ENCODE measurements at regions of chr20 and their contacts with region 1.

Region 1: GRCh38 chr20:4844325-4844724 is 122.6 kb downstream of the PRND start:
- DNase-seq: peak; percentile 10
- H3K4me3 ChIP-seq: no peak overlapping the region
- H3K27ac ChIP-seq: no peak overlapping the region
- H3K4me1 ChIP-seq: no peaks in the 10 kb centered on the region
- H3K27me3 ChIP-seq: no peaks in the 10 kb centered on the region
- CTCF ChIP-seq: no peak

Region 2: DNA sequence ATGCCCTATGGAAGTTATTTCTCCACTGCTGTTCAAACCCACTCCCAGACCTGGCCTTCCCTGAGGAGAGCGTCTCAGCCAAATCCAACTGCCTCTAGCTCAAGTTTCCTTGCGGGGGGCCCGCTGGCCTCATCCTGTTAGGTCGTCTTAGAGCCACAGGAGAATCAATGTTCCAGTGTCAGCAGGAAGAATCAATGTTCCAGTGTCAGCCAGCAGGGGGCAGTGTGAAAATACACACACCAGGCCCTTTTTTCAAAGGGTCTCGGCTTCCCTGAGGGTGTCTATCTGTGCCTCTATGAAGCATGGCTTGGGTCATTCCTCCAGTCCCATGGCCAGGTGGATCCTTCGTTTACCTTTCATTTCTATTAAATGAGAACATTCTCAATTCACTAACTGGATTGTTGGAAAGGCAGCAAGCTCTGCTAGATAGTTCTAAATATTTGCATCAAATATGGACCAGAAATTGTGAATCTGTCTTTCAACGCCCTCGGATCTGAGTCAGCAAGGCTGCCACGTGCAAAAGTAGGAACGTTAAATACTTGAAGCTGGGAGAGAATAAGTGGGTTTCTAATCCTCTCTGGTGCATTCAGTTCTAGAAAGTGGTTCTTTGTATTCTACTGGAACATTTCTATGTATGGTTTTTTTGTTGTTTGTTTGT is 103.4 kb before region 1 on chr20:
- CTCF ChIA-PET with region 1: no interaction called
- POLR2A ChIA-PET with region 1: no interaction called
- intact Hi-C with region 1: no loop called
- DNase-seq: peak; percentile 74
- H3K4me3 ChIP-seq: no peak overlapping the region
- H3K27ac ChIP-seq: no peak overlapping the region
- H3K4me1 ChIP-seq: no peaks in the 10 kb centered on the region
- H3K27me3 ChIP-seq: peaks cover 2% of the 10 kb centered on the region
- CTCF ChIP-seq: peak; percentile 88

Region 3: GRCh38 chr20:4787069-4787468 is 57.3 kb before region 1 on chr20:
- CTCF ChIA-PET with region 1: no interaction called
- POLR2A ChIA-PET with region 1: no interaction called
- intact Hi-C with region 1: no loop called
- DNase-seq: no peak
- H3K4me3 ChIP-seq: no peak overlapping the region
- H3K27ac ChIP-seq: no peak overlapping the region
- H3K4me1 ChIP-seq: no peaks in the 10 kb centered on the region
- H3K27me3 ChIP-seq: no peaks in the 10 kb centered on the region
- CTCF ChIP-seq: no peak

Region 4: DNA sequence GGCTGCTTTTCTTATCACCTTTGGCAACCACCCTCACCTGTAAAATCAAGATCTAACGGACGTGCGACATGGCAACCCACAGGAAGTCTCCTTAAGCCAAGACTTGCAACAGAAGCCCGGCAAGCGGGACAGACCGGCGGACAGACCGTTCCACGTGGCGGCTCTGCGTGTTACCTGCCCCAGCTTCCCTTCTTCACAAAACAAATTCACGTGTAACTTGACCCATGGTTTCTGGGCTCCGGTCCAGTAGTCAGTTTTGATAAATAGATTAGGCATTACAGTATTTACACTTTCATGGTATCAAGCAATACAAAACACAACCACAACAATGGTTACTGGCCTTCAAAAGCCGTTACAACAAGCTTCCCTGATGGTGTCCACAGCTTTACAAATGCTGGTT is 11.2 kb after region 1 on chr20:
- CTCF ChIA-PET with region 1: no interaction called
- POLR2A ChIA-PET with region 1: no interaction called
- intact Hi-C with region 1: no loop called
- DNase-seq: no peak
- H3K4me3 ChIP-seq: no peak overlapping the region
- H3K27ac ChIP-seq: no peak overlapping the region
- H3K4me1 ChIP-seq: no peaks in the 10 kb centered on the region
- H3K27me3 ChIP-seq: no peaks in the 10 kb centered on the region
- CTCF ChIP-seq: no peak

Region 5: GRCh38 chr20:4979841-4980410 is 135.6 kb after region 1 on chr20:
- CTCF ChIA-PET with region 1: no interaction called
- POLR2A ChIA-PET with region 1: interaction called, 18 read pairs
- intact Hi-C with region 1: no loop called
- DNase-seq: no peak
- H3K4me3 ChIP-seq: no peak overlapping the region
- H3K27ac ChIP-seq: no peak overlapping the region
- H3K4me1 ChIP-seq: peaks cover 17% of the 10 kb centered on the region
- H3K27me3 ChIP-seq: no peaks in the 10 kb centered on the region
- CTCF ChIP-seq: no peak

Region 6: GRCh38 chr20:5046656-5047339 is 202.5 kb after region 1 on chr20:
- CTCF ChIA-PET with region 1: no interaction called
- POLR2A ChIA-PET with region 1: no interaction called
- intact Hi-C with region 1: no loop called
- DNase-seq: no peak
- H3K4me3 ChIP-seq: no peak overlapping the region
- H3K27ac ChIP-seq: no peak overlapping the region
- H3K4me1 ChIP-seq: no peaks in the 10 kb centered on the region
- H3K27me3 ChIP-seq: no peaks in the 10 kb centered on the region
- CTCF ChIP-seq: no peak

Region 7: DNA sequence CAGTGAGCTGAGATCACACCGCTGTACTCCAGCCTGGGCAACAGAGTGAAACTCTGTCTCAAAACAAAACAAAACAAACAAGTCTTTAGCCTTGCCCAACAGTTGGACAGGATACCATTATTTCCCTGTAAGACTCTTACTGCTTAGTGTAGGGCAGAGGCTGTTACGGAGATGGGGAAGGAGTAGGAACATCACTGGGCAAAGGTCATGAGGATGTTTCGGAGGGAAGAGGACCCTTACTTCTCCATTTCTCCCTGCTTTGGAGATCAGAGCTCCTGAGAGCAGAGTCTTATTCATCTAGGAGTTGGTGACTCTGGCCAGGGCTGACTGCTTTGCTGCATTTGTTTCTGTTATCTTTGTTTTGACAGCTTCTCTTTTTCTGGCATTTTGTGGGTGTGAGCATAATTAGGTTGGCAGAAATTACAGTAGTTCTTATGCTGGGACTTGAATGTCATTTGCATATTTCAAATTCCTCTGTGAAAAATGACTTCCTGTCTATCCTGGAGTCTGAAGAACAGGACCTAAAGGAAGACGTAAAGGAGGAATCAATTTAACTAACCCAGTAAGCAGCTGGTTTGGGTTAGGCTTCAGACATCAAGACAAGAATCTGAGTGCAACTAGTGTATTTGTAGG is 371.5 kb after region 1 on chr20:
- CTCF ChIA-PET with region 1: no interaction called
- POLR2A ChIA-PET with region 1: interaction called, 10 read pairs
- intact Hi-C with region 1: no loop called
- DNase-seq: peak; percentile 88
- H3K4me3 ChIP-seq: no peak overlapping the region
- H3K27ac ChIP-seq: peak overlapping the region; percentile 51
- H3K4me1 ChIP-seq: peaks cover 20% of the 10 kb centered on the region
- H3K27me3 ChIP-seq: no peaks in the 10 kb centered on the region
- CTCF ChIP-seq: no peak